ENCODE measurements at regions of chr15 and their contacts with region 1.

Region 1: DNA sequence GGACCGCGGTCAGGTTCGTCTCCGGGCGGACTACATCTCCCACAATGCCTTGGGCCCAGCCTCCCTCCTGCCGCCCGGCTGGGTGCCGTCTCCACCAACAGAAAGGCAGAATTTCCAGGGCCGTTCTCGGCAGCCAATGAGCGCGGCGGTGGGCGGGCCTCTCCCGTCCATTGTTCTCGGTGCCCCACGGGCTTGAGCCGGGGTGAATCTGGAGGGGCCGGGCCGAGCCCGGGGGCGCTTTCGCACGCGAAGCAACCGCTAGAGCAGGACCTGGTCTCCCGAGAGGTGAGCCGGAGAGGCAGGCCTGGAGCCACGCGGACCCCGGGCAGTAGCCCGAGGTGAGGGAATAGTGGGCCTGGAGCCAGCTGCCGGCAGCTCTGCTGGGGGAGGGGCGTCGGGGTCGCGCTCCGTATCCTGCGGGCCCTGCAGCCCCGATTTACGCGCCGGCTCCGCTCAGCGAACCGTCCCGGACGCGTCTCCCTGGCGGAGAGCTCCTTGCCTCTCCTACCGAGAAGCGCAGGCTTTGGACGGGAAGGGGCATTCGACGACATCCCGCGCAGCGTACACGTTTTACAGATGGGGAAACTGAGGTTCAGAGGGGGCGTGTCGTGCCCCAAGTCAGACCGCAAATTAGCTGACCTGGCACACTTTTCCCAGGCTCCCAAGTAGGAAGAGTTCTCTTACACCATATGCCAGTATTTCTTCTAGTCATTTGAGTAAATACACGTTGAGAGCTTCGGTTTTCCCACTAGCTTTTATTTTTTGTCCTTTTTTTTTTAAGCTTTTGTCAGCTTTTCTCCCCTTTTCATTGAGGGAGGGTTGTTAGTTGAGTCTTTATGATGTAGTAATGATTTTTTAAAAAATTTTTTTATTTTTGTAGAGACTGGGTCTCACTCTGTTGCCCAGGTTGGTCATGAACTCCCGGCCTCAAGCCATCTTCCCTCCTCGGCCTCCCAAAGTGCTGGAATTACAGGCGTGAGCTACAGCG is at the start of gene ZSCAN2:
- DNase-seq: peak; percentile 97
- H3K4me3 Mint-ChIP-seq: peak within 1 kb of the TSS; percentile 90
- H3K27ac Mint-ChIP-seq: no peak within 1 kb of the TSS
- H3K4me1 Mint-ChIP-seq: peaks cover 62% of the 10 kb centered on the region
- H3K27me3 Mint-ChIP-seq: no peaks in the 10 kb centered on the region
- total RNA-seq, gene ZSCAN2: 5.3 to 5.6 TPM

Region 2: GRCh38 chr15:84588053-84588874 is 12.9 kb before region 1 on chr15:
- CTCF ChIA-PET with region 1: interaction called, 16 read pairs
- intact Hi-C with region 1: no loop called
- DNase-seq: peak; percentile 89
- H3K4me3 Mint-ChIP-seq: peak overlapping the region; percentile 34
- H3K27ac Mint-ChIP-seq: no peak overlapping the region
- H3K4me1 Mint-ChIP-seq: peaks cover 2% of the 10 kb centered on the region
- H3K27me3 Mint-ChIP-seq: peaks cover 4% of the 10 kb centered on the region

Region 3: GRCh38 chr15:84716036-84716799 is 115.1 kb after region 1 on chr15 and contains the start of gene SEC11A:
- CTCF ChIA-PET with region 1: no interaction called
- intact Hi-C with region 1: loop called (anchors 2 kb)
- DNase-seq: peak; percentile 93
- H3K4me3 Mint-ChIP-seq: peak within 1 kb of the TSS; percentile 93
- H3K27ac Mint-ChIP-seq: peak within 1 kb of the TSS; percentile 93
- H3K4me1 Mint-ChIP-seq: peaks cover 51% of the 10 kb centered on the region
- H3K27me3 Mint-ChIP-seq: no peaks in the 10 kb centered on the region
- total RNA-seq, gene SEC11A: 87.2 to 99.1 TPM

Region 4: DNA sequence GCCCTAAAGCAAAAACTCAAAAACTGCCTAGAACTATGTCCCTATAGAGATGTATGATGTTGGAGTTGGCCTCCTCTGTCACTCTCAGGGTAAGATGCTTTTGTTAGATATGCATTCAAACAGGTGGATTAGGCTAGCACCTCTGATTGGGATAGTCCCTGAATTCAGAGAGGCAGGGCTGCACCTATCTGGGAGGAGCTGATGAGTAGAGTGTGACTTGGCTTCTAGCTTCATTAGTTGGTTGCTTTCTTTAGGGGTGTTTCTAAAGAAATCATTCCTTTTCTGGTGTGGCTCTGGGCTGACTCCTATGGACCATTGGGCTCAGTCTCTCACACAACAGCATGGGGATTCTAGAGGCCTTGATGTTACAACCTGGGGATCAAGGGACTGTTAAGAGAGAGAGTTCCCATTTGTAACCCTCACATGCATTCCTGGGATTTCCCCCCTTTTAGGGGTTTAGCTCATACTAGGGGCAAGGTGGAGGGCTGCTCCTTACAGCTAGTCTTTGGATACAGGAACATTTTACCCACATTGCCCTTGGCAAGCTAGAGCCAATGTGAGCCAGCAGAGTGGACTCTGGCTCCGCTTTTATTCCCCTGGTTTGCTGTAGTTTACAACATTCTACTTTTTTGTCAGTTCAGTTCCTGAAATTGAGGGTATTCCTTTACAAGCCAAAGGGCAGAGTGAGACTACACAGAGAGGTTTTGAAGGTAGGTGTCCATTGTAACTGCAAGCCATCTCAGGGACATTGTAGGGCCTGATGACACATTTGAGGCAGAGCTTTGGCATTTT is 154.8 kb after region 1 on chr15:
- CTCF ChIA-PET with region 1: interaction called, 4 read pairs
- intact Hi-C with region 1: loop called (anchors 2 kb)
- DNase-seq: peak; percentile 64
- H3K4me3 Mint-ChIP-seq: no peak overlapping the region
- H3K27ac Mint-ChIP-seq: no peak overlapping the region
- H3K4me1 Mint-ChIP-seq: peaks cover 47% of the 10 kb centered on the region
- H3K27me3 Mint-ChIP-seq: no peaks in the 10 kb centered on the region

Region 5: GRCh38 chr15:84797212-84797611 is 196.1 kb after region 1 on chr15:
- CTCF ChIA-PET with region 1: no interaction called
- intact Hi-C with region 1: no loop called
- DNase-seq: no peak
- H3K4me3 Mint-ChIP-seq: no peak overlapping the region
- H3K27ac Mint-ChIP-seq: no peak overlapping the region
- H3K4me1 Mint-ChIP-seq: no peaks in the 10 kb centered on the region
- H3K27me3 Mint-ChIP-seq: no peaks in the 10 kb centered on the region

Region 6: GRCh38 chr15:84871428-84872305 is 270.5 kb after region 1 on chr15:
- CTCF ChIA-PET with region 1: interaction called, 7 read pairs
- intact Hi-C with region 1: loop called (anchors 2 kb)
- DNase-seq: peak; percentile 30
- H3K4me3 Mint-ChIP-seq: no peak overlapping the region
- H3K27ac Mint-ChIP-seq: no peak overlapping the region
- H3K4me1 Mint-ChIP-seq: no peaks in the 10 kb centered on the region
- H3K27me3 Mint-ChIP-seq: no peaks in the 10 kb centered on the region

Region 7: GRCh38 chr15:84929744-84930371 is 328.7 kb after region 1 on chr15:
- CTCF ChIA-PET with region 1: interaction called, 15 read pairs
- intact Hi-C with region 1: loop called (anchors 1 kb)
- DNase-seq: no peak
- H3K4me3 Mint-ChIP-seq: no peak overlapping the region
- H3K27ac Mint-ChIP-seq: no peak overlapping the region
- H3K4me1 Mint-ChIP-seq: peaks cover 6% of the 10 kb centered on the region
- H3K27me3 Mint-ChIP-seq: no peaks in the 10 kb centered on the region

Measured in activated naive CD4-positive, alpha-beta T cell treated with anti-CD3 and anti-CD28 coated beads for 36 hours (primary cell).